AG04449 (cell line): ENCODE measurements at regions of chr17 and their contacts with region 1.

Region 1: GRCh38 chr17:75012346-75013091 is at the start of gene MRPL58:
- DNase-seq: no peak
- H3K4me3 ChIP-seq: peak within 1 kb of the TSS; percentile 86
- CTCF ChIP-seq: peak; percentile 70

Region 2: GRCh38 chr17:74987418-74987908 is 25.1 kb before region 1 on chr17 and contains the start of gene CDR2L:
- CTCF ChIA-PET with region 1: interaction called, 46 read pairs
- POLR2A ChIA-PET with region 1: interaction called, 45 read pairs
- DNase-seq: peak; percentile 67
- H3K4me3 ChIP-seq: peak within 1 kb of the TSS; percentile 74
- CTCF ChIP-seq: no peak

Region 3: DNA sequence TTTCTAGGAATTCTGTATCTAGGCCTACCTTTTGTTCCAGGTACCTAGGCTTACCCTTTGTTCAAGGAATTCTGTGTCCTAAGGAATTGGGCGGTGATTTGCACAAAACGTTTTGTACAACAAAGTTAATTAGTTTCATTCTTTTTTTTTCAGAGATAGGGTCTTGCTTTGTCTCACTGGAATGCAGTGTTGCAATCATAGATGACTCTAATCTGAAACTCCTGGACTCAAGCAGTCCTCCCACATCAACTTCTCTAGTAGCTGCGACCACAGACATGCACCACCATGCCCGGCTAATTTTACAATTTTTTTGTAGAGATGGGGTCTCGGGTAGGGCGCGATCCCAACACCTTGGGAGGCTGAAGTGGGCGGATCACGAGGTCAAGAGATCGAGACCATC is 18.0 kb before region 1 on chr17:
- CTCF ChIA-PET with region 1: interaction called, 46 read pairs
- POLR2A ChIA-PET with region 1: interaction called, 45 read pairs
- DNase-seq: no peak
- H3K4me3 ChIP-seq: no peak overlapping the region
- CTCF ChIP-seq: no peak

Region 4: GRCh38 chr17:75024686-75025397 is 12.3 kb after region 1 on chr17:
- CTCF ChIA-PET with region 1: interaction called, 30 read pairs
- POLR2A ChIA-PET with region 1: interaction called, 3 read pairs
- DNase-seq: no peak
- H3K4me3 ChIP-seq: no peak overlapping the region
- CTCF ChIP-seq: no peak

Region 5: DNA sequence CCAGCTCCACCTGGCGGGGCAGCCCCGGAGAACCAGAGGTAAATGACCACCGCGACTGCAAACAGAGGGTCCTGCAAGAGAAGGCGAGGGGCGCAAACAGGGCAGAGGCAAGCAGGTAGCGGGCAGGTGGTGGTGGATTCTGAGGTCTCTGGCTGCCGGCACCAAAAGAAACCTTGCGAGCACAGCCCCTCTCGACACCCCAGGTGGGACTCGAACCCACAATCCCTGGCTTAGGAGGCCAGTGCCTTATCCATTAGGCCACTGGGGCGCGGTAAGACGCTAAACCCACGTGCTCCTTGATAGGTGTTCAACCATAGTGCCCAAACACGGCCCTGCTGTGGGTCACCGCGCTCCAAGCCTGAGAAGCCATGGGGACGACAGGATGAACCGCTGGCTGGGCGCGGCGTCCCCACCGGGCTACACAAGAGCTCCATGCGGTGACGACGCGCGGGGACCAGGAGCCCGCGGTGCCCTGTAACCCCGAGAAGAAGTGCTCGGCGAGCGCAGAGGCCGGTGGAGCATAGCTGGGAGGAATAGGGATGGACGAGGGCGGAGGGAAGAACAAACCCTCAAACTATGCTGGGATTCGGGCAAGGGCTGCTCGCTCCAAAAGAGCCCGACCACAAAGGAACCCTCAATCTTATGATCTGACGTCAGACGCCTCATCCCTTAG is 21.9 kb after region 1 on chr17:
- CTCF ChIA-PET with region 1: interaction called, 13 read pairs
- POLR2A ChIA-PET with region 1: interaction called, 19 read pairs
- DNase-seq: no peak
- H3K4me3 ChIP-seq: peak overlapping the region; percentile 95
- CTCF ChIP-seq: peak; percentile 2

Region 6: DNA sequence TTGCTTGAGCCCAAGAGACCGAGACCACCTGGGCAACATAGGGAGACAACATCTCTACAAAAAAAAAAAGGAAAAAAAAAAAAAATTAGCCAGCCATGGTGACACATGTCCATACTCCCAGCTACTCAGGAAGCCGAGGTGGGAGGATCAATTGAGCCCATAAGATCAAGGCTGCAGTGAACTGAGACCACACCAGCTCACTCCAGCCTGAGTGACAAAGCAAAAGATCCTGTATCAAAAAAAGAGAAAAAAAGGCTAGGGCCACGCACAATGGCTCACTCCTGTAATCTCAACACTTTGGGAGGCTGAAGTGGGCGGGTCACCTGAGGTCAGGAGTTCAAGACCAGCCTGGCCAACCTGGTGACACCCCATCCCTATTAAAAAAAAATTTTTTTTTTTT is 156.5 kb after region 1 on chr17:
- CTCF ChIA-PET with region 1: no interaction called
- POLR2A ChIA-PET with region 1: no interaction called
- DNase-seq: no peak
- H3K4me3 ChIP-seq: no peak overlapping the region
- CTCF ChIP-seq: no peak